ENCODE measurements at regions of chr16 and their contacts with region 1.

Region 1: DNA sequence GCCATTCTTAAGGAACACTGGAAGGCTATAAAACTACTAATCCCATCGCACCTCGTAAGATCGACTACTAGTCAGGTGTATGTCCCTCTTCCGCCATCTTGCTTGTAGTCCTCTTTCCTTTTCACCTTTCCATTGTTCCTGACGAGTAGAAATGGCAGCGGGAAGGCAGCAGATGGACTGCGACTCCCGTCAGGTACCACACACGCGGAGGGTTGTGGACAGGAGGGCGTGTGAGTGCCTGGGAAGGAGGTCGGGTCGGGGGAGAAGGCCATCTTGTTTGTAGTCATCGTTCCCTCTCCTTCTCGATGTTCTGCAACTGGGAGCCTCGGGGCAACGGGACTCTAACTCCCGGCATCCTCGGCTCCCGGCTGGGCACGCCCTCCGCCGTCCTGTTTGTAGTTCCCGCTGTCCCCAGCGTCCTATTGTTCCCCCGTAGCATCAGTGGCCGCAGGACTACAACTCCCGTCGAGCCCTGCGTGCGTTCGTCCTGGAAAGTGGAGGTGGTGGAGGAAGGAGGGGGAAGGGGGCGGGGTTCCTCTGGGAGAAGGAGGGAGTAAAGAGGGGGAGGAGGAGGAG is 324 bp upstream of the FBXL19 start:
- DNase-seq: peak; percentile 87 to 99 (median 93)
- ATAC-seq: peak; percentile 66
- H3K4me3 ChIP-seq: peak overlapping the region; percentile 93
- H3K4me3 Mint-ChIP-seq: peak overlapping the region; percentile 99
- H3K27ac ChIP-seq: peak overlapping the region; percentile 85 to 98
- H3K27ac Mint-ChIP-seq: peak overlapping the region; percentile 92
- H3K4me1 ChIP-seq: peaks cover 27% of the 10 kb centered on the region
- H3K4me1 Mint-ChIP-seq: peaks cover 19% of the 10 kb centered on the region
- H3K27me3 ChIP-seq: no peaks in the 10 kb centered on the region
- H3K27me3 Mint-ChIP-seq: no peaks in the 10 kb centered on the region
- CTCF ChIP-seq: no peak

Region 2: GRCh38 chr16:30370444-30371247 is 552.4 kb before region 1 on chr16 and contains the start of gene TBC1D10B:
- CTCF ChIA-PET with region 1: no interaction called
- POLR2A ChIA-PET with region 1: no interaction called
- intact Hi-C with region 1: loop called in 1 of 2 experiments (anchors 10 kb)
- DNase-seq: peak; percentile 97 to 100 (median 99)
- ATAC-seq: peak; percentile 84
- H3K4me3 ChIP-seq: peak within 1 kb of the TSS; percentile 77
- H3K4me3 Mint-ChIP-seq: peak within 1 kb of the TSS; percentile 93
- H3K27ac ChIP-seq: peak within 1 kb of the TSS; percentile 59 to 78
- H3K27ac Mint-ChIP-seq: peak within 1 kb of the TSS; percentile 82
- H3K4me1 ChIP-seq: peaks cover 49% of the 10 kb centered on the region
- H3K4me1 Mint-ChIP-seq: peaks cover 51% of the 10 kb centered on the region
- H3K27me3 ChIP-seq: no peaks in the 10 kb centered on the region
- H3K27me3 Mint-ChIP-seq: no peaks in the 10 kb centered on the region
- CTCF ChIP-seq: peak; percentile 27
- total RNA-seq, gene TBC1D10B: 12.7 to 14.7 TPM

Region 3: GRCh38 chr16:30698139-30698815 is 224.8 kb before region 1 on chr16:
- CTCF ChIA-PET with region 1: no interaction called
- POLR2A ChIA-PET with region 1: no interaction called
- intact Hi-C with region 1: loop called in 1 of 2 experiments (anchors 1 kb)
- DNase-seq: peak; percentile 97 to 100 (median 99)
- ATAC-seq: peak; percentile 75
- H3K4me3 ChIP-seq: peak overlapping the region; percentile 97
- H3K4me3 Mint-ChIP-seq: peak overlapping the region; percentile 98
- H3K27ac ChIP-seq: peak overlapping the region; percentile 100
- H3K27ac Mint-ChIP-seq: peak overlapping the region; percentile 100
- H3K4me1 ChIP-seq: peaks cover 38% of the 10 kb centered on the region
- H3K4me1 Mint-ChIP-seq: peaks cover 37% of the 10 kb centered on the region
- H3K27me3 ChIP-seq: no peaks in the 10 kb centered on the region
- H3K27me3 Mint-ChIP-seq: no peaks in the 10 kb centered on the region
- CTCF ChIP-seq: no peak

Region 4: DNA sequence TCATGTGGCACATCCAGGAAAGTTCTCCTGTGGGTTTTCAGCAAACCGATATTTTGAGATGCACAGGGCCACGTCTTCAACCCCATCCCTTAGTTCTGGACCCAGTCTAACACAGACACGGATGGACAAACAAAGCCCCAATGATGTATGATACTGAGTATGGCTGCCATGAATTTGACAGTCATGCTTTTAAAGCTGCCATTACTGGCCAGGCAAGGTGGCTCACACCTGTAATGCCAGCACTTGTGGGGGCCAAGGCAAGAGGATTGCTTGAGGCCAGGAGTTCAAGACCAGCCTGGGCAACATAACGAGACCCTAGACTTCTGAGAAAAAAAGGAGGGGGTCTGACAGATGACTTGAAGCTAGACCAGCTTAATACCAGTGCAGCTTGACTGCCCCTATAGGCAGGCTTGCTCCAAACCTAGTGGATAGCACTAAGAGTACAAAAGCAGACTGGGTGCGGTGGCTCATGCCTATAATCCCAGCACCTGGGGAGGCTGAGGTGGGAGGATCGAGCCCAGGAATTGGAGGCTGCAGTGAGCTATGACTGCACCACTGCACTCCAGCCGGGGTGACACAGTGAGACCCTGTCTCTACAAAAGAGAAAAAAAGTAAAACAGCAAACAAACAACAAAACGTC is 125.3 kb before region 1 on chr16:
- CTCF ChIA-PET with region 1: no interaction called
- POLR2A ChIA-PET with region 1: no interaction called
- intact Hi-C with region 1: no loop called
- DNase-seq: no peak
- ATAC-seq: no peak
- H3K4me3 ChIP-seq: no peak overlapping the region
- H3K4me3 Mint-ChIP-seq: no peak overlapping the region
- H3K27ac ChIP-seq: no peak overlapping the region
- H3K27ac Mint-ChIP-seq: no peak overlapping the region
- H3K4me1 ChIP-seq: no peaks in the 10 kb centered on the region
- H3K4me1 Mint-ChIP-seq: no peaks in the 10 kb centered on the region
- H3K27me3 ChIP-seq: no peaks in the 10 kb centered on the region
- H3K27me3 Mint-ChIP-seq: no peaks in the 10 kb centered on the region
- CTCF ChIP-seq: no peak

Region 5: GRCh38 chr16:30844671-30845449 is 78.2 kb before region 1 on chr16:
- CTCF ChIA-PET with region 1: interaction called, 19 read pairs
- POLR2A ChIA-PET with region 1: interaction called, 13 read pairs
- intact Hi-C with region 1: loop called (anchors 1 kb)
- DNase-seq: peak; percentile 52 to 93 (median 79)
- ATAC-seq: peak; percentile 96
- H3K4me3 ChIP-seq: no peak overlapping the region
- H3K4me3 Mint-ChIP-seq: peak overlapping the region; percentile 52
- H3K27ac ChIP-seq: no peak overlapping the region
- H3K27ac Mint-ChIP-seq: peak overlapping the region; percentile 24
- H3K4me1 ChIP-seq: peaks cover 8% of the 10 kb centered on the region
- H3K4me1 Mint-ChIP-seq: peaks cover 11% of the 10 kb centered on the region
- H3K27me3 ChIP-seq: no peaks in the 10 kb centered on the region
- H3K27me3 Mint-ChIP-seq: no peaks in the 10 kb centered on the region
- CTCF ChIP-seq: peak; percentile 91

Region 6: GRCh38 chr16:30902029-30902972 is 20.7 kb before region 1 on chr16:
- CTCF ChIA-PET with region 1: interaction called, 5 read pairs
- POLR2A ChIA-PET with region 1: interaction called, 17 read pairs
- intact Hi-C with region 1: loop called (anchors 1 to 2 kb)
- DNase-seq: peak in 12 of 14 experiments; percentile 25 to 83 (median 52)
- ATAC-seq: peak; percentile 85
- H3K4me3 ChIP-seq: peak overlapping the region; percentile 58
- H3K4me3 Mint-ChIP-seq: peak overlapping the region; percentile 97
- H3K27ac ChIP-seq: peak overlapping the region; percentile 67 to 81
- H3K27ac Mint-ChIP-seq: peak overlapping the region; percentile 87
- H3K4me1 ChIP-seq: peaks cover 44% of the 10 kb centered on the region
- H3K4me1 Mint-ChIP-seq: peaks cover 32% of the 10 kb centered on the region
- H3K27me3 ChIP-seq: no peaks in the 10 kb centered on the region
- H3K27me3 Mint-ChIP-seq: no peaks in the 10 kb centered on the region
- CTCF ChIP-seq: no peak

Region 7: DNA sequence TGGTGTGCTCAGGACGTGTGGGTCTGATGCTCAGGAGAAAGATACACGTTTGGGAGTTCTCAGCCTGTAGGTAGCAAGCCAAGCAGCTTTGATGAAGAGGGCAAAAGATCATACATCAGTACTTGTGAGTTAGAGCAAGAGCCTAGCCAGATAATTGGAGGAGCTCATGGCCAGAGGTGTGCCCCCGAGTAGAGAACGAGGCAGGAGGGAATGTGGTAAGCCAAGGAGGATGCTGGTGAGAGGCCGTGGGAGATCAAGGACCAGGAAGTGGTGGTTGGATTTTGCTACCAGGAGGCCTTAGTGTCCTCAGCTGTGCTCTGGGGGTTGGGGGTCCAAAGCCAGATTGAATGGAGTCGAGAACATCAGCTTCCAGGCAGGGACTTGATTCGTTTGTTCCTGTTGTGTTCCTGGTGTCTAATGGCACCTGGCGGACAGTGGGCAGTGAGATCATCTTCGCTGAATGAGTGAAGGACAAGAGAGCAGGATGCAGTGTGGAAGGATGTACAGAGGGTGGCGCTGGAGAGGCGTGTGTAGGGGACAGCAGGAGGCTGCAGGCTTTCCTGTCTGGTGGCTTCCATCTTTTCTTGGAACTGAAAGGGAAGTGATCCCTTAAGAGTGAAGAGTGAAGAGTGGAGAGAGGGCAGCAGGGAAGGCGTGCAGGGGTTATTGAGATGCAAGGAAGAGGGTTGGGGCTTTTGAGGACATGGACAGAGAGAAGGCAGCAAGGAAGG is 11.9 kb after region 1 on chr16:
- CTCF ChIA-PET with region 1: no interaction called
- POLR2A ChIA-PET with region 1: no interaction called
- intact Hi-C with region 1: no loop called
- DNase-seq: peak in 4 of 14 experiments; percentile 24 to 61 (median 50)
- ATAC-seq: peak; percentile 76
- H3K4me3 ChIP-seq: no peak overlapping the region
- H3K4me3 Mint-ChIP-seq: no peak overlapping the region
- H3K27ac ChIP-seq: no peak overlapping the region
- H3K27ac Mint-ChIP-seq: peak overlapping the region; percentile 8
- H3K4me1 ChIP-seq: peaks cover 8% of the 10 kb centered on the region
- H3K4me1 Mint-ChIP-seq: peaks cover 20% of the 10 kb centered on the region
- H3K27me3 ChIP-seq: no peaks in the 10 kb centered on the region
- H3K27me3 Mint-ChIP-seq: no peaks in the 10 kb centered on the region
- CTCF ChIP-seq: no peak

Region 8: GRCh38 chr16:31032736-31033708 is 110.0 kb after region 1 on chr16 and contains the start of gene STX4:
- CTCF ChIA-PET with region 1: no interaction called
- POLR2A ChIA-PET with region 1: no interaction called
- intact Hi-C with region 1: loop called (anchors 2 kb)
- DNase-seq: peak; percentile 93 to 100 (median 96)
- ATAC-seq: peak; percentile 81
- H3K4me3 ChIP-seq: peak within 1 kb of the TSS; percentile 95
- H3K4me3 Mint-ChIP-seq: peak within 1 kb of the TSS; percentile 97
- H3K27ac ChIP-seq: peak within 1 kb of the TSS; percentile 93 to 96
- H3K27ac Mint-ChIP-seq: peak within 1 kb of the TSS; percentile 83
- H3K4me1 ChIP-seq: peaks cover 26% of the 10 kb centered on the region
- H3K4me1 Mint-ChIP-seq: peaks cover 27% of the 10 kb centered on the region
- H3K27me3 ChIP-seq: no peaks in the 10 kb centered on the region
- H3K27me3 Mint-ChIP-seq: no peaks in the 10 kb centered on the region
- CTCF ChIP-seq: no peak
- total RNA-seq, gene STX4: 54.1 to 55.2 TPM

Region 9: GRCh38 chr16:31458844-31459721 is 536.0 kb after region 1 on chr16 and contains the start of gene ARMC5:
- CTCF ChIA-PET with region 1: no interaction called
- POLR2A ChIA-PET with region 1: no interaction called
- intact Hi-C with region 1: loop called in 1 of 2 experiments (anchors 1 kb)
- DNase-seq: peak; percentile 91 to 99 (median 95)
- ATAC-seq: peak; percentile 72
- H3K4me3 ChIP-seq: peak within 1 kb of the TSS; percentile 97
- H3K4me3 Mint-ChIP-seq: peak within 1 kb of the TSS; percentile 94
- H3K27ac ChIP-seq: peak within 1 kb of the TSS; percentile 98 to 99
- H3K27ac Mint-ChIP-seq: peak within 1 kb of the TSS; percentile 98
- H3K4me1 ChIP-seq: peaks cover 56% of the 10 kb centered on the region
- H3K4me1 Mint-ChIP-seq: peaks cover 49% of the 10 kb centered on the region
- H3K27me3 ChIP-seq: no peaks in the 10 kb centered on the region
- H3K27me3 Mint-ChIP-seq: no peaks in the 10 kb centered on the region
- CTCF ChIP-seq: peak; percentile 71
- total RNA-seq, gene ARMC5: 8.5 to 10.8 TPM